ENCODE measurements at regions of chr3 and their contacts with region 1.

Region 1: DNA sequence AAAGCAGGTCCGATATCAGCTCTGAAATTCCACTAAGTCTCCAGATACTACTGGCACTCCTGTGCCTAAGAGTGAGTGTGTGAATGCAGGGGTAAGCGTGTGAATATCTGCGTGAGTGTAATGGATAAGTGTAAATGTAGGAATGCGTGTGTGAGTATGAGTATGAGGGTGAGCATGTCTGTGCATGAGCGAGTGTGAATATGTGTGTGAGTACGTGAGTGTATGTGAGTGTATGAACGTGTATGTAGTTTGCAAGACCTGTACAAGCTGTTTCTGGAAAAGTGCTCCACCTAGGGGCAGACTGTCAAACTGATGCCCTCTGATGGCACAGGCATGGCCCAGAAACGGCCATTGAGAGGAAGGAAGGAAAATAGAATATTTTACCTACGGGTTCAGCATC is 24.4 kb upstream of the FRMD4B start:
- DNase-seq: peak; percentile 77
- ATAC-seq: peak; percentile 74 to 82

Region 2: DNA sequence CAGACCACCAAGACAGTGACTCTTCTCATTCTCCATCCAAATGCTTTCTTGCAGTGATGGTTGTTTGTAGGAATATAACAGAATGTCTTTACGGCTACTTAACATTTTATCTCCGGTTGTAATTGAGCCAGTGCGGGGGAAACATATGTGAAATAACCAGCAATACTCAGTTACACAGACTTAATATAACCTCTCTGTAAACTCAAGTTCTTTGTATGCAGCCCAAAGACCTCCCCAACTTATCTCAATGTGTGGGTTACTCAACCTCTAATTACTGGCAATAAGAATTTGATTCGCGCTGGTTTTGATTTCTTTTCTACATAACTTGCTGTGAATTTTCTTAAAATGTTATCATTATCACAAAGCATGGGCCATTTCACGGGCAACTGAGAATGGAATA is 728.5 kb before region 1 on chr3:
- intact Hi-C with region 1: no loop called
- DNase-seq: no peak
- ATAC-seq: no peak

Region 3: DNA sequence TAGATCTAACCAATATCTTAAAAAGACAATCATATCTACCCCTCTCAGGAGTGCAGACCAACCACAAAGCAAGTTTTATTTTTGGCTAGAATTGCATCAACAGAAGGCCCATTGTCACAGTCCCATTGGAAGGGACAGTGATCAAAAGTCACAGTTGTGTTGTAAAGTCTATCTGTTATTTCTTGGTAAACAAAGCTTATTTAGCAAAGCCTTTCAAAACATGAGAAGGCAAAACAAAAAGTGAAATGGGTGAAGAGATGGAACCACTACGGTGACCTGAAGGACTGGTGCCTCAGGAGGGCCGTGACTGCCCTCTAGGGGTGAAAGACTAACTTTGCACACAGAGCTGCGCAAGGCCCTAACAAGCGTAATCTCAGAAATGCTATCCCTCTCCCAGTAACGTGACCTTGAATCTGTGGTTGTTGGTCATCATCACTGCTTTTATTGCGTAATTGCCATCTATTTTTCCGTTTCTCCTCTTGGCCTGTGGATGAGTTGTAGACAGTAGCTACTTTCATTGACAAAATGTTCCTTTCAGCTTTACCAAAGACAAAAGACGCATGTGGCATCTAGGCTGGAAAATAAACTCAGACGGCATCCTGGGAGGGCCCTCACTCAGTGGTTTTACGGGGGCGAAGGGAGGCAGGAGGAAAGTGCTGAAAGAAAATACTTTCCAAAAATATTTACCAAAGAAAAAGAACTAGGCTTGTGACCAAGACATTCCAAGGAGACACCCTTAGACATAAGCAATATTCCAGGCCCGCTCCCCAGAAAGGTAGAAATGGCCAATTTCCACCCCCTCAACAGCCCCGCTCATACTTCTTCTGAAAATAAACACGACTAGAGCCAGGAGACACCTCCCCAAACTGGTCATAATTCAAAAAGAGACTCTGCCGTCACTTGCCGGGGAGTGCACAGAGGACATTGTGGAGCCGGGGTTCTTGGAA is 103.7 kb before region 1 on chr3:
- intact Hi-C with region 1: loop called in 1 of 2 experiments (anchors 5 kb)
- DNase-seq: peak; percentile 72
- ATAC-seq: peak; percentile 94 to 95

Region 4: GRCh38 chr3:69324362-69325025 is 85.8 kb before region 1 on chr3:
- intact Hi-C with region 1: loop called (anchors 5 to 10 kb)
- DNase-seq: no peak
- ATAC-seq: peak in 1 of 2 donors; percentile 16

Region 5: DNA sequence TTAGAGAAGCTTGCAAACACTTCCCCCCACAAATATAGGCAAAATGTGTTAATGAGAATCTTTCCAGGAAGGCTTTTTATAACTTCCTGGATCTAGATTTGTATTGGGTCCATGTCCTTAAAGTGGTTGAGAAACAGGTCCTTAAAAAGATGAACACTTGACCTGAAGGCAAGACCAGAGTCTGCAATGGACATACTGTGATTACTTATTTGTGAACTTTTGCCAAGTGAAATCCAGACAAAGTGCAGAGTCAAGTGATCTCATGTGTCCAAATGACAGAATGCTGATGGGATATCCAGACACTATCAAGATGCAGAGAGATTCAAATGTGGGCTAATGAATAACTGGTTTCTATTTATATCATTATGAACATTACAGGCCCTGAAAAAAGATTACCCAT is 68.2 kb before region 1 on chr3:
- intact Hi-C with region 1: no loop called
- DNase-seq: no peak
- ATAC-seq: peak; percentile 30 to 72

Region 6: GRCh38 chr3:69364354-69364753 is 45.9 kb before region 1 on chr3:
- intact Hi-C with region 1: no loop called
- DNase-seq: no peak
- ATAC-seq: peak in 1 of 2 donors; percentile 38